Activated CD4-positive, alpha-beta T cell treated with anti-CD3 and anti-CD28 coated beads, Interleukin-2, amount 10 ng/mL, durations not matched to agents 24 days and 14 days (primary cell): ENCODE measurements at regions of chr11 and their contacts with region 1.

Region 1: DNA sequence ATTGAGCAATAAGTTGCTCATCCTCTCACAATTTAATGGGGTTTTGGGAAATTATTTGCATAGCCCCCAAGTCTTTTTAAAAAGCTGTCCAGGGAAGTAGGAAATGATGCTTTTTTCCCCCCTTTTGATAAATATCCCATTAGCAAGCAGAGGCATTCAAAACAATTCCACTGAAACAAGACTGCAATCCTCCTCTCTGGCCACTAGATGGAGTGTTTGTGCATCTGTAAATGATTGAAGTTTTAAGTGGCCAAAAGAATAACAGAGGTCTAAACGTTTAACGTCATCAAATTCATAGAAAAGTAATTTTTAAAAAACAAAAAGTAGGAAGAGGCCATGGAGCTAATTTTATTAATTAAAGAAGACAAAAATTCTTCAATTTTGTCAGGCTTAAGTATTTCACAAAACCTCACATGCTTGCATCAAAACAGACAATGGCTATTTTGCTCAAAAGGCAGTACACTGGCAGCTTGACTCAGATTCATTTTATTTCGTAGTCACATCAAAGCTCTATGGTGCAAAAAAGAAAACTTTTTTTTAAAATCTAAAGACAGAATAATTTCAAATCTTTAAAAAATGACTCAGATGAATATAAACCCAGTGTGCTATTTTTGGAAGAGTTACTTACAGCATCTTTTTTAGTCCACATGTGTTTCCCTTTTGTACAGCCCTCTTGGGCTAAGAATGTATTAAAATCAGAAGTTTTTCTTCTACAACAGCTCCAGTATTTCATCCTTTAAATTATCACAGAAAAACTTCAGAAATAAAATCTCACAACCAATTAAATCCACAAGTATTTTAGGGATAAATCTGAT is 17.8 kb downstream of the CHORDC1 start:
- DNase-seq: peak; percentile 68
- H3K4me3 Mint-ChIP-seq: no peak overlapping the region
- H3K27ac Mint-ChIP-seq: peak overlapping the region; percentile 52
- H3K4me1 Mint-ChIP-seq: peaks cover 5% of the 10 kb centered on the region
- H3K27me3 Mint-ChIP-seq: no peaks in the 10 kb centered on the region

Region 2: GRCh38 chr11:90220391-90220790 is 15.4 kb after region 1 on chr11:
- intact Hi-C with region 1: loop called (anchors 2 kb)
- DNase-seq: no peak
- H3K4me3 Mint-ChIP-seq: peak overlapping the region; percentile 92
- H3K27ac Mint-ChIP-seq: peak overlapping the region; percentile 21
- H3K4me1 Mint-ChIP-seq: peaks cover 41% of the 10 kb centered on the region
- H3K27me3 Mint-ChIP-seq: no peaks in the 10 kb centered on the region